A673 (cell line): ENCODE measurements at regions of chr2 and their contacts with region 1.

Region 1: GRCh38 chr2:20126040-20126439 is 74.6 kb upstream of the LAPTM4A start:
- DNase-seq: no peak
- H3K4me3 ChIP-seq: no peak overlapping the region
- H3K27ac ChIP-seq: no peak overlapping the region
- H3K4me1 ChIP-seq: no peaks in the 10 kb centered on the region
- H3K27me3 ChIP-seq: no peaks in the 10 kb centered on the region
- CTCF ChIP-seq: no peak

Region 2: GRCh38 chr2:20242060-20243006 is 116.3 kb after region 1 on chr2:
- CTCF ChIA-PET with region 1: interaction called, 14 read pairs
- POLR2A ChIA-PET with region 1: no interaction called
- intact Hi-C with region 1: no loop called
- DNase-seq: no peak
- H3K4me3 ChIP-seq: no peak overlapping the region
- H3K27ac ChIP-seq: no peak overlapping the region
- H3K4me1 ChIP-seq: no peaks in the 10 kb centered on the region
- H3K27me3 ChIP-seq: no peaks in the 10 kb centered on the region
- CTCF ChIP-seq: peak; percentile 54

Region 3: GRCh38 chr2:20282916-20283592 is 157.0 kb after region 1 on chr2:
- CTCF ChIA-PET with region 1: no interaction called
- POLR2A ChIA-PET with region 1: no interaction called
- intact Hi-C with region 1: no loop called
- DNase-seq: peak; percentile 24
- H3K4me3 ChIP-seq: no peak overlapping the region
- H3K27ac ChIP-seq: no peak overlapping the region
- H3K4me1 ChIP-seq: peaks cover 4% of the 10 kb centered on the region
- H3K27me3 ChIP-seq: no peaks in the 10 kb centered on the region
- CTCF ChIP-seq: no peak

Region 4: GRCh38 chr2:21042958-21043743 is 917.1 kb after region 1 on chr2:
- CTCF ChIA-PET with region 1: no interaction called
- POLR2A ChIA-PET with region 1: no interaction called
- intact Hi-C with region 1: no loop called
- DNase-seq: peak; percentile 44
- H3K4me3 ChIP-seq: no peak overlapping the region
- H3K27ac ChIP-seq: no peak overlapping the region
- H3K4me1 ChIP-seq: no peaks in the 10 kb centered on the region
- H3K27me3 ChIP-seq: peaks cover 88% of the 10 kb centered on the region
- CTCF ChIP-seq: peak; percentile 97